Naive thymus-derived CD4-positive, alpha-beta T cell (primary cell): ENCODE measurements at regions of chr12 and their contacts with region 1.

Region 1: DNA sequence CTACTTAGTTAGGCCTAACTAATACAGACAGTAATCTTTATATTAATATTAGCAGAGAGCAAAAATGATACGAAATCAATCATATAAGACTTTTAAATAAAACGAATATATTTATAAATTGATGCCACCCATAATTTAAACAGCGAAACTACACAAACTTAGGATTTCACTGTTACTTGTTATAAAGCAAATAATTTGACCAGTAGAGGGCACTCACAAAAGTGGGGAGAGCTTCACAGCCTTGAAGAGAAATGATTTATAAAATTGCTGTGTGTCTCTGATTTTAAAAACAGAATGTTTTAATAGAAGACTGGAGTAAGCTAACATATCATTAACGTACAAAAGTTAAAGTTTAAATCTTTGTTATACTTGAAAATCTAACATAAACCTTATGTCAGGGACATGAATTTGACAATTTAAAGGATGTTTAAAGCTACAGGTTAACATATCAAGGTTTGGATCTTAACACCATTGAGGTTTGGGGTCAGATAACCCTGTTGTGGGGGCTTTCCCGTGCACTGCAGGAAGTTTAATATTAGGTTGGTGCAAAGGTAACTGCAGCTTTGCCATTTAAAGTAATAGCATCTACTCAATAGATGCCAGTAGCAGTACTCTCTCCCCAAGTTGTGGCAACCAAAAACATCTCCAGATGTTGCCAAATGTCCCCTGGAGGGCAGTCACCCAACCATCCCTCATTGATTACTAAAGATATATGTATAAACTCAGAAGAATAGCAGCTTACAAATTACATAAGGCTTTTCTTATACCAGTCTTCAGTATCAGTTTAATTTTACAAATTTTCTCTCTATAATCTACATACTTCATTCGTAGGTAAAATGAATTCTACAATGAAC is 9.3 kb downstream of the KRAS start:
- DNase-seq: peak in 7 of 9 donors; percentile 48 to 71 (median 64)
- ATAC-seq: peak; percentile 89
- H3K4me3 ChIP-seq: no peak overlapping the region
- H3K4me3 Mint-ChIP-seq: peak overlapping the region in 1 of 10 donors; percentile 21
- H3K27ac ChIP-seq: peak overlapping the region; percentile 20
- H3K27ac Mint-ChIP-seq: peak overlapping the region in 6 of 9 donors; percentile 44 to 84 (median 65)
- H3K4me1 ChIP-seq: peaks cover 10% of the 10 kb centered on the region in 2 donors
- H3K4me1 Mint-ChIP-seq: peaks cover 17 to 79% (median 53%) of the 10 kb centered on the region in 7 donors
- H3K27me3 ChIP-seq: no peaks in the 10 kb centered on the region
- H3K27me3 Mint-ChIP-seq: no peaks in the 10 kb centered on the region

Region 2: GRCh38 chr12:24991209-24992049 is 250.0 kb before region 1 on chr12:
- CTCF ChIA-PET with region 1: interaction called, 5 read pairs
- POLR2A ChIA-PET with region 1: no interaction called
- intact Hi-C with region 1: loop called in 1 of 2 experiments (anchors 2 kb)
- DNase-seq: peak in 7 of 9 donors; percentile 53 to 75 (median 64)
- ATAC-seq: peak; percentile 97
- H3K4me3 ChIP-seq: no peak overlapping the region
- H3K4me3 Mint-ChIP-seq: no peak overlapping the region
- H3K27ac ChIP-seq: no peak overlapping the region
- H3K27ac Mint-ChIP-seq: no peak overlapping the region
- H3K4me1 ChIP-seq: no peaks in the 10 kb centered on the region
- H3K4me1 Mint-ChIP-seq: peaks cover 0 to 2% (median 0%) of the 10 kb centered on the region in 7 donors
- H3K27me3 ChIP-seq: no peaks in the 10 kb centered on the region
- H3K27me3 Mint-ChIP-seq: peaks cover 0 to 7% (median 6%) of the 10 kb centered on the region in 5 donors

Region 3: GRCh38 chr12:25151476-25151875 is 89.9 kb before region 1 on chr12:
- CTCF ChIA-PET with region 1: interaction called, 7 read pairs
- POLR2A ChIA-PET with region 1: no interaction called
- intact Hi-C with region 1: loop called in 1 of 2 experiments (anchors 5 kb)
- DNase-seq: no peak
- ATAC-seq: no peak
- H3K4me3 ChIP-seq: no peak overlapping the region
- H3K4me3 Mint-ChIP-seq: no peak overlapping the region
- H3K27ac ChIP-seq: no peak overlapping the region
- H3K27ac Mint-ChIP-seq: peak overlapping the region in 1 of 9 donors; percentile 0
- H3K4me1 ChIP-seq: no peaks in the 10 kb centered on the region
- H3K4me1 Mint-ChIP-seq: peaks cover 0 to 7% (median 6%) of the 10 kb centered on the region in 7 donors
- H3K27me3 ChIP-seq: no peaks in the 10 kb centered on the region
- H3K27me3 Mint-ChIP-seq: peaks cover 0 to 3% (median 0%) of the 10 kb centered on the region in 5 donors

Region 4: DNA sequence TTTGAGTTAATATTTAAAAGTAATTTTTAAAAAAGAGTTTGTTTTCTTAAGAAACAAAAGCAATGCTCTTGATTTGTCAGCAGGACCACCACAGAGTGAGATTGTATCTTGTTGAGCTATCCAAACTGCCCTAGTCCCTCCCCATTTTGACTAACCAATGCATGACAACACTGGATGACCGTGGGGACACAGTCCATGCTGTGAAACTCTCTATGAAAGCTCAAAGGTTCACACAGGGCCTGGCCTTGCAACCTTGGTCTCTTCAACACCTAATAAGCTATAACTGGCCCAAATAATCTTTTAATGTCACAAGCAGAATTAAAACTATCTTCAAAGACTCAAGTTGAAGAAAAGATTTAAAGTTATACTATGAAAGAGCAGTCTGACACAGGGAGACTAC is 32.8 kb before region 1 on chr12:
- CTCF ChIA-PET with region 1: interaction called, 6 read pairs
- POLR2A ChIA-PET with region 1: interaction called, 3 read pairs
- intact Hi-C with region 1: loop called in 1 of 2 experiments (anchors 2 kb)
- DNase-seq: no peak
- ATAC-seq: no peak
- H3K4me3 ChIP-seq: no peak overlapping the region
- H3K4me3 Mint-ChIP-seq: no peak overlapping the region
- H3K27ac ChIP-seq: no peak overlapping the region
- H3K27ac Mint-ChIP-seq: peak overlapping the region in 1 of 9 donors; percentile 78
- H3K4me1 ChIP-seq: no peaks in the 10 kb centered on the region
- H3K4me1 Mint-ChIP-seq: peaks cover 0 to 30% (median under 1%) of the 10 kb centered on the region in 7 donors
- H3K27me3 ChIP-seq: no peaks in the 10 kb centered on the region
- H3K27me3 Mint-ChIP-seq: no peaks in the 10 kb centered on the region

Region 5: GRCh38 chr12:25377469-25378177 is 136.2 kb after region 1 on chr12:
- CTCF ChIA-PET with region 1: interaction called, 13 read pairs
- POLR2A ChIA-PET with region 1: interaction called, 13 read pairs
- intact Hi-C with region 1: no loop called
- DNase-seq: peak in 8 of 9 donors; percentile 46 to 81 (median 68)
- ATAC-seq: peak; percentile 90
- H3K4me3 ChIP-seq: no peak overlapping the region
- H3K4me3 Mint-ChIP-seq: peak overlapping the region; percentile 26 to 70 (median 60)
- H3K27ac ChIP-seq: peak overlapping the region; percentile 80
- H3K27ac Mint-ChIP-seq: peak overlapping the region; percentile 82 to 97 (median 92)
- H3K4me1 ChIP-seq: peaks cover 9 to 38% of the 10 kb centered on the region in 2 donors
- H3K4me1 Mint-ChIP-seq: peaks cover 27 to 71% (median 68%) of the 10 kb centered on the region in 7 donors
- H3K27me3 ChIP-seq: no peaks in the 10 kb centered on the region
- H3K27me3 Mint-ChIP-seq: no peaks in the 10 kb centered on the region

Region 6: DNA sequence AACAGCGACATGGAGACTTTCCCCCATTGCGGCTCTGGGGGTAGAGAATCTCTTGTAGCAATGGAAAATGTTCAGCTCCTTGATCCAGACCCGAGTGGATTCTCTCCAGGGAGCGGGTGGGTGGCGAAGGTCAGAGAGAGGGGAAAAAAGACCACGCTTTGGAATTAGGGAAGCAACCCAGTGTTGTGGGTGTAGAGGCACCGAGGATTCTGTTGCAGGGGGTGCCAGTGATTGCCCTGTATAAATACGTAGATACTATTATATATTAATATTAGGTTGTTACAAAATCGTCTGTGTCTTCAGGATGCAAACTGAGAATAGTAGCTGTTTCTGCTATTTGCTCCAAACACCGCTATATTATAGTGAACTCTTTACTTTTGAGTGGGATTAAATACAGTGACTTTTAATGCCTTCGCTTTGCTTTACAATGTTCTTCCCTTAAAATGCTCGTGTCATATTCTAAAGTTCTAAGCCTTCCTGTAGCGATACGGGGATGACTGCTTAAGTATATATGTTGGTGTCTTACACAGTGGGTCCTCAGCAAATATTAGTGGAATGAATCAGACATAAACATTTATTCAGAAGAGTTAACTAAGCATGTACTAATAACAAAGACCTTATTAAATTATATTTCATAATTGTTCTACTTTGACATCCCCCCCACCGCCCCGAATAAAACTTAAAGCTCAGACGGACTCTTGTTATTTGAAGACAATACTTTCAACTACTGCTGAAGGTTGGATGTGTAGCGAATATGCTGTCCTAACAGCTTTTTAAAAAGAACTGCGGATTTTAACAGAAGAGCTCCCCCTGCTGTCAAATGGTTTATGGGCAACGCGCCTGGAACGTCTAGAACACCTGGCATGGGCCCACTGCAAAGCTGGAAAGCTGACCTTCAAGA is 145.7 kb after region 1 on chr12:
- CTCF ChIA-PET with region 1: interaction called, 10 read pairs
- POLR2A ChIA-PET with region 1: no interaction called
- intact Hi-C with region 1: loop called (anchors 1 kb)
- DNase-seq: peak; percentile 48 to 86 (median 83)
- ATAC-seq: peak; percentile 18
- H3K4me3 ChIP-seq: peak overlapping the region; percentile 97
- H3K4me3 Mint-ChIP-seq: peak overlapping the region; percentile 90 to 100 (median 96)
- H3K27ac ChIP-seq: peak overlapping the region; percentile 98
- H3K27ac Mint-ChIP-seq: peak overlapping the region; percentile 91 to 100 (median 100)
- H3K4me1 ChIP-seq: peaks cover 19 to 24% of the 10 kb centered on the region in 2 donors
- H3K4me1 Mint-ChIP-seq: peaks cover 13 to 61% (median 35%) of the 10 kb centered on the region in 7 donors
- H3K27me3 ChIP-seq: no peaks in the 10 kb centered on the region
- H3K27me3 Mint-ChIP-seq: peaks cover 0 to 2% (median 0%) of the 10 kb centered on the region in 5 donors

Region 7: GRCh38 chr12:25997201-25997963 is 756.0 kb after region 1 on chr12:
- CTCF ChIA-PET with region 1: no interaction called
- POLR2A ChIA-PET with region 1: no interaction called
- intact Hi-C with region 1: no loop called
- DNase-seq: no peak
- ATAC-seq: no peak
- H3K4me3 ChIP-seq: no peak overlapping the region
- H3K4me3 Mint-ChIP-seq: no peak overlapping the region
- H3K27ac ChIP-seq: no peak overlapping the region
- H3K27ac Mint-ChIP-seq: no peak overlapping the region
- H3K4me1 ChIP-seq: no peaks in the 10 kb centered on the region
- H3K4me1 Mint-ChIP-seq: no peaks in the 10 kb centered on the region
- H3K27me3 ChIP-seq: no peaks in the 10 kb centered on the region
- H3K27me3 Mint-ChIP-seq: peaks cover 0 to 9% (median 2%) of the 10 kb centered on the region in 5 donors